Activated T-helper 1 cell treated with anti-CD3 and anti-CD28 coated beads, Interleukin-12 subunit alpha, Interleukin-12 subunit beta, Interleukin-2, Interleukin-4 antibody, amounts not matched to agents 30 ng/mL and 10 ng/mL and 1 ng/mL, durations not matched to agents 14 hours and 24 hours and 36 hours (primary cell): ENCODE measurements at regions of chr1 and their contacts with region 1.

Region 1: GRCh38 chr1:65419681-65420589 is 533 bp upstream of the LEPR start:
- DNase-seq: peak; percentile 98
- H3K4me3 Mint-ChIP-seq: no peak overlapping the region
- H3K27ac Mint-ChIP-seq: peak overlapping the region; percentile 90
- H3K4me1 Mint-ChIP-seq: peaks cover 32% of the 10 kb centered on the region
- H3K27me3 Mint-ChIP-seq: peaks cover 5% of the 10 kb centered on the region

Region 2: GRCh38 chr1:63984257-63984929 is 1435.5 kb before region 1 on chr1:
- intact Hi-C with region 1: no loop called
- DNase-seq: no peak
- H3K4me3 Mint-ChIP-seq: no peak overlapping the region
- H3K27ac Mint-ChIP-seq: no peak overlapping the region
- H3K4me1 Mint-ChIP-seq: no peaks in the 10 kb centered on the region
- H3K27me3 Mint-ChIP-seq: peaks cover 7% of the 10 kb centered on the region

Region 3: DNA sequence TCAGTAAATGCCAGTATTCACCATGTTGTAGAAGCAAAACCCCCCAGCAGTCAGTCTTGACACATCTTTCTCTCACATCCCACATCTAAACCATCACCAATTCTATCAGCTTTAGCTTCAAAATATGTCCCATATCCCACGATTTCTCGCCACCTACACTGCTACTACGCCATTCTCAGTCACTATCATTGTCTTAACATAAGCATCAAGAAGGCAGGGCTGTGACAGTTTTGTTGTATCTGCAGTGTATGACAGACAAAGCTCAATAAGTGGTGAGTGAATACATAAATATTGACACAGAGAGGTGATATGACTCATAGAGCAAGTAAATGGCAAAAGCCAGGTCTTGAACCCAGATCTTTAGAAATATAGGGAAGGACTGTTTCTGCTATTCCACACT is 513.5 kb before region 1 on chr1:
- intact Hi-C with region 1: loop called (anchors 5 kb)
- DNase-seq: no peak
- H3K4me3 Mint-ChIP-seq: peak overlapping the region; percentile 34
- H3K27ac Mint-ChIP-seq: peak overlapping the region; percentile 78
- H3K4me1 Mint-ChIP-seq: peaks cover 54% of the 10 kb centered on the region
- H3K27me3 Mint-ChIP-seq: no peaks in the 10 kb centered on the region

Region 4: GRCh38 chr1:65148548-65149350 is 271.2 kb before region 1 on chr1:
- intact Hi-C with region 1: loop called (anchors 2 kb)
- DNase-seq: peak; percentile 55
- H3K4me3 Mint-ChIP-seq: peak overlapping the region; percentile 94
- H3K27ac Mint-ChIP-seq: peak overlapping the region; percentile 90
- H3K4me1 Mint-ChIP-seq: peaks cover 52% of the 10 kb centered on the region
- H3K27me3 Mint-ChIP-seq: peaks cover 7% of the 10 kb centered on the region

Region 5: GRCh38 chr1:65230731-65231481 is 189.0 kb before region 1 on chr1:
- intact Hi-C with region 1: loop called (anchors 1 kb)
- DNase-seq: no peak
- H3K4me3 Mint-ChIP-seq: no peak overlapping the region
- H3K27ac Mint-ChIP-seq: peak overlapping the region; percentile 81
- H3K4me1 Mint-ChIP-seq: peaks cover 32% of the 10 kb centered on the region
- H3K27me3 Mint-ChIP-seq: no peaks in the 10 kb centered on the region

Region 6: GRCh38 chr1:65254319-65255034 is 165.5 kb before region 1 on chr1:
- intact Hi-C with region 1: loop called (anchors 1 kb)
- DNase-seq: peak; percentile 83
- H3K4me3 Mint-ChIP-seq: peak overlapping the region; percentile 93
- H3K27ac Mint-ChIP-seq: peak overlapping the region; percentile 40
- H3K4me1 Mint-ChIP-seq: peaks cover 34% of the 10 kb centered on the region
- H3K27me3 Mint-ChIP-seq: peaks cover 23% of the 10 kb centered on the region

Region 7: GRCh38 chr1:65265651-65266351 is 154.1 kb before region 1 on chr1:
- intact Hi-C with region 1: no loop called
- DNase-seq: peak; percentile 16
- H3K4me3 Mint-ChIP-seq: peak overlapping the region; percentile 71
- H3K27ac Mint-ChIP-seq: no peak overlapping the region
- H3K4me1 Mint-ChIP-seq: peaks cover 36% of the 10 kb centered on the region
- H3K27me3 Mint-ChIP-seq: peaks cover 15% of the 10 kb centered on the region

Region 8: GRCh38 chr1:65309304-65310077 is 110.4 kb before region 1 on chr1 and contains the start of gene DNAJC6:
- intact Hi-C with region 1: loop called (anchors 2 kb)
- DNase-seq: peak; percentile 53
- H3K4me3 Mint-ChIP-seq: peak within 1 kb of the TSS; percentile 78
- H3K27ac Mint-ChIP-seq: peak within 1 kb of the TSS; percentile 23
- H3K4me1 Mint-ChIP-seq: peaks cover 13% of the 10 kb centered on the region
- H3K27me3 Mint-ChIP-seq: peaks cover 49% of the 10 kb centered on the region
- total RNA-seq, gene DNAJC6: 4.4 and 6.2 TPM in 2 replicates

Region 9: DNA sequence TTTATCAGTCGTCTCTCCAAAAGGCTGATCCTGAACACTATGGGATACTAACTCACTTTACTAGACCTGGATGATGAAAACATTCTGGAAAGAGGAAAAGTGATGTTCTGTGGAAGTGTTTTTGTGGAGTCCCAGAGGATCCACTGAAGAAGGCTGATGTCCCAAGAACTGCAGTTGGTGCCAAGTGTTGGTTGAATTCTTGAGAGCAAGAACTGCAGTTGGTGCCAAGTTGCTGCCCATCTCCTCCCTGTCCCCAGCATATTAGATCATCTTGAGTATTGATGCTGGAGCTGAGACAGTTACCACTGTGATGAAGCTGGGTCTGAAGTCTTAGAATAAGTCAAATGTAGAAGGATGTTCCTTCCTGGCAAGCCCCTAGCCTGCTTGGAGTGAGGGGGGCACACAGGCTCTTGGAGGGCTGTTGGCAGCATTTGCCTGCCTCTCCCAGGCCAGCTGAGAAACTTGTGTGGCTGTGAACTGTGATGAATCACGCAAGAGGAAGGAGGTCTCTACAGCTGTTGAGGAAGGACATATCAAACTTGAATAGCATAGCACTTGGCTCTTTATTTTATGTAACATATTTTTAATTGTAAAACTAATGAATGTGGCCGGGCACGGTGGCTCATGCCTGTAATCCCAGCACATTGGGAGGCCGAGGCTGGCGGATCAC is 62.5 kb before region 1 on chr1:
- intact Hi-C with region 1: no loop called
- DNase-seq: no peak
- H3K4me3 Mint-ChIP-seq: no peak overlapping the region
- H3K27ac Mint-ChIP-seq: no peak overlapping the region
- H3K4me1 Mint-ChIP-seq: no peaks in the 10 kb centered on the region
- H3K27me3 Mint-ChIP-seq: peaks cover 3% of the 10 kb centered on the region

Region 10: DNA sequence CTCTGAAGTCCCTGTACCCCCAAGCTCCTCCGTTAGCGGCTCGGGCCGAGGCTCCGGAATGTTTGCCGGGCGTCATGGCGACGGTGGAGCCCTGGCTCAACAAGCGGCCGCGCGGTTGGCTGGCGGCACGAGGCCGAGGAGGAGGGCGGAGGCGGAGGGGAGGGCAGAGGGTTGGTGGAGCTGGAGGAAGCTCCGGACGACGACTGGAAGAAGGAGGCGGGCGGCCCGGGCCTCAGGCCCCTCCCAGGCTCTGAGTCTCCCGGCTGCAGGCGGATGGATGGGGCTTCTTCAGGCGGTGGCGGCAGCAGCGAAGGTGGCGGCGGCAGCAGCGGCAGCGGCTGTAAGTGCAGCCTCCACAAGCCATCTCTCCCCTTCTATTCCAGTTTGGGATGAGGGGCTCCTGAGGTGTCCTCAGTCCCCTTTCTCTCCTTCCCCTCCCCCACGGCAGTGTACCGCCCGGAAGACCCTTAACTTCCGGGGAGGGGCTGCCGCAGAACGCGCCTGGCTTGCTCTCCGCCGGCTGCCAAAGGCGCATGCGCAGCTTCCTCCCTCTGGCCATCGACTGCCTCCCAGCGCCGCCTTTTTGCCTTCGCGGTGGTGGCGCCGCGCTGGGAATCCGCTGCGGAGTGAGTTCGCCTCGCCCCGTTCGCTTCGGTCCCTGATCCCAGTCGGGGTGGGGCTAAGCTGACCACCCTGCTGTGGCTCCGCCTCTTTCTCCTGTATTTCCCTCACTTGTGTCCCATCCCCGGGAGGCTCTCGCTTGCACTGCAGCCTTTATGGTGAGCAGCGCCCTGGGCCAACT is 1505.0 kb after region 1 on chr1 and contains the starts of genes DNAI4 and MIER1:
- intact Hi-C with region 1: loop called (anchors 10 kb)
- DNase-seq: peak; percentile 98
- H3K4me3 Mint-ChIP-seq: peak within 1 kb of the TSS; percentile 93
- H3K27ac Mint-ChIP-seq: peak within 1 kb of the TSS; percentile 97
- H3K4me1 Mint-ChIP-seq: peaks cover 66% of the 10 kb centered on the region
- H3K27me3 Mint-ChIP-seq: no peaks in the 10 kb centered on the region
- total RNA-seq, gene DNAI4: 1.2 and 3.2 TPM in 2 replicates
- total RNA-seq, gene MIER1: 53.2 and 57.4 TPM in 2 replicates